ENCODE measurements at regions of chr21 and their contacts with region 1.

Region 1: GRCh38 chr21:16250273-16250672 is 520.5 kb downstream of the USP25 start:
- DNase-seq: no peak

Region 2: DNA sequence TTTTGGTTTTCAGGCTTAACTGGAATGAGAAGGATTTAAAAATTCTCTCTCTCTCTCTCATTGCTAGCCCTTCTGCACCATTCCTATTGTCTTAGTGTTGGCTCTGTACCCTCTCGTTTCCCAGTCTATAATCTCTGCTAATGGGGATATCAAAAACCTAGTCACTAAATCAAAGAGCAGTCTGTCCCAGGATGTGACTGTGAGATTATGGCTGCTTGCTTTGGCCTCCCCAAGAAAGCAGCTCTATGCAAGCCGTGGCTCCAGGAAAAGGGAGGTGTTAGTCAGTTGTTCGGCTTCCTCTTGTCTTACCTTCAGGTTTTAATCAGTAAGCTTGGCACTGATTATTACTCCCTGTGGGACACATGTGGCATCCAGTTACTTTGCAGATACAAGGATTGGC is 51.7 kb before region 1 on chr21:
- intact Hi-C with region 1: no loop called
- DNase-seq: no peak

Region 3: GRCh38 chr21:16211339-16212303 is 38.7 kb before region 1 on chr21:
- intact Hi-C with region 1: loop called (anchors 5 kb)
- DNase-seq: no peak

Region 4: GRCh38 chr21:16318646-16319300 is 68.5 kb after region 1 on chr21:
- intact Hi-C with region 1: no loop called
- DNase-seq: no peak

Region 5: GRCh38 chr21:16330082-16330907 is 80.0 kb after region 1 on chr21:
- intact Hi-C with region 1: no loop called
- DNase-seq: peak in 1 of 10 donors; percentile 20

Measured in posterior cingulate gyrus (tissue), 11 donors.